Left ventricle myocardium superior (tissue), 1 donor: ENCODE measurements at regions of chr4 and their contacts with region 1.

Region 1: DNA sequence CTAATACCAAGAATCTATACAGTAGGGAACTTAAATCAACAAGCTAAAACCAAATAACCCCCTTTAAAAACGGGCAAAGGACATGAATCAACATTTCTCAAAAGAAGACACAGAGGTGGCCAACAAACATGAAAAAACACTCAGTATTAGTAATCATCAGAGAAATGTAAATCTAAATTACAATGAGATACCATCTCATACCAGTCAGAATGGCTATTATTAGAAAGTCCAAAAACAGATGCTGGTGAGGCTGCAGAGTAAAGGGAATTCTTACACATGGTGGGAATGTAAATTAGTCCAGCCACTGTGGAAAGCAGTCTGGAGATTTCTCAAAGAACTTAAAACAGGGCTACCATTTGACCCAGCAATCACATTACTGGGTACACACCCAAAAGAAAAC is 167.8 kb downstream of the PACRGL start:
- DNase-seq: no peak
- ATAC-seq: no peak

Region 2: GRCh38 chr4:20805716-20806115 is 62.4 kb before region 1 on chr4:
- intact Hi-C with region 1: no loop called
- DNase-seq: no peak
- ATAC-seq: no peak

Region 3: DNA sequence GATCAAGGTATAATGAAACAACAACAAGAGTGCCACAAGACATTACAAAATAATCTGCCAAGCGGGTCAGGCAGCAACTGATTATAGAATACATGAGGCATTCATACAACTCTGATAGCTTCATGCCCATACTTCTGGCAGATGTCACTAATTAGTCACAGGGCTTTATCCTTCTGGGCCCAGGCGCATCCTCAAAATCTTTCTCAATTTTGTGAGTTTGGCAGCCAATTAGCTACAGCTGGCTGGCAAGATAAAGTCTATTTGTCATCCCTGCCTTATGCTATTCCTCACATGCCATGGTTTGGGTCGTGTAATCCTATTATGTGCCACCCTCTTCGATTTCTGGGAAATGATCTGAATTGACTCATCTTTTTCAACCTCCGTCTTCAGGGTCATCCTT is 86.4 kb after region 1 on chr4:
- intact Hi-C with region 1: loop called (anchors 5 kb)
- DNase-seq: no peak
- ATAC-seq: no peak

Region 4: GRCh38 chr4:21012851-21013331 is 144.8 kb after region 1 on chr4:
- intact Hi-C with region 1: no loop called
- DNase-seq: no peak
- ATAC-seq: no peak